ENCODE measurements at regions of chr14 and their contacts with region 1.

Region 1: GRCh38 chr14:64387694-64388532 is at the start of gene MTHFD1:
- DNase-seq: peak; percentile 99 to 100
- ATAC-seq: peak; percentile 94 to 96
- H3K4me3 ChIP-seq: peak within 1 kb of the TSS; percentile 69 to 82 (median 78)
- H3K27ac ChIP-seq: peak within 1 kb of the TSS; percentile 90 to 96 (median 92)
- H3K4me1 ChIP-seq: peaks cover 16 to 29% of the 10 kb centered on the region in 2 donors
- H3K27me3 ChIP-seq: no peaks in the 10 kb centered on the region
- CTCF ChIP-seq: no peak
- POLR2A ChIP-seq: peak; percentile 54 to 60
- total RNA-seq, gene MTHFD1: 36.2 to 68.7 (median 42.0) TPM

Region 2: GRCh38 chr14:64082837-64083236 is 305.1 kb before region 1 on chr14:
- in situ Hi-C with region 1: no loop called
- intact Hi-C with region 1: loop called (anchors 5 kb)
- DNase-seq: peak; percentile 25 to 60
- ATAC-seq: peak; percentile 97 to 98
- H3K4me3 ChIP-seq: no peak overlapping the region
- H3K27ac ChIP-seq: peak overlapping the region; percentile 69 to 86 (median 84)
- H3K4me1 ChIP-seq: peaks cover 15 to 22% of the 10 kb centered on the region in 2 donors
- H3K27me3 ChIP-seq: no peaks in the 10 kb centered on the region
- CTCF ChIP-seq: no peak
- POLR2A ChIP-seq: peak in 1 of 2 donors; percentile 33

Region 3: DNA sequence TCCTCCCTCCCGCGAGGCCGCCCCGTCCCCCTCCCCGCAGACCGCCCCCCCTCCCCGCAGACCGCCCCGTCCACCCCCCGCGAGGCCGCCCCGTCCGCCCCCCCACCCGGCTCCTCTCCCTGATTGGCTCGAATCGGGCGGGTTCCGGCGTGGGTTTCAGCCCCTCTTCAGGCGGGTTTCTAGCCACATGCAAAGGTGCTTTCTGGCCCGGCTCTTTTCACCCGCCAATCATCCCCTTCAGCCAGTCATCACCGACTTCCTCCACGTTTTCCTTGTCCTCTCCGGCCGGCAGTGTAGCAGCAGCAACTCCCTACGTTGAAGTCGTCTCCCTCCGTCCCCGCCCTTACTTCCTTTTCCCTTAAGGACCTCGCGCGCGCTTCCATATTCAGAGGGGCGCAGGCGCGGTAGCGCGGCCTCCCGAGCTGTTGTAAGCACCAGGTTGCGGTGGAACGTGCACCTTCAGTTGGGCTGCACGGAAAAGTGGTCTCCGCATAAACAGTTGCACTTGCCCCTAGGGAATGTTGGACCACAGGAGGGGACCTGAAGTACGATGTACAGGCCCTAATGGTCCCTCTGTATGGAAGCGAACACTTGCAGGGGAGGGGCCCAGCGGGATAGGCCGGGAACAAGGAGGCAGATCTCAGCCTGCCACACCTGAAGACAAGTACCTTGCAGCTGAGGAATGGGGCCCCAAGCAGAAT is 49.1 kb before region 1 on chr14:
- in situ Hi-C with region 1: no loop called
- intact Hi-C with region 1: loop called (anchors 5 kb)
- DNase-seq: peak; percentile 89 to 93
- ATAC-seq: peak; percentile 96 to 97
- H3K4me3 ChIP-seq: peak overlapping the region; percentile 63 to 90 (median 79)
- H3K27ac ChIP-seq: peak overlapping the region; percentile 70 to 82 (median 74)
- H3K4me1 ChIP-seq: peaks cover 6 to 9% of the 10 kb centered on the region in 2 donors
- H3K27me3 ChIP-seq: no peaks in the 10 kb centered on the region
- CTCF ChIP-seq: no peak
- POLR2A ChIP-seq: peak; percentile 51 to 82